Activated B cell treated with CpG ODN at 0.5 μM for 24 hours (primary cell): ENCODE measurements at regions of chrX and their contacts with region 1.

Region 1: GRCh38 chrX:110317820-110318658 is at the start of gene AMMECR1:
- DNase-seq: peak; percentile 74
- ATAC-seq: peak; percentile 85
- H3K4me3 Mint-ChIP-seq: peak within 1 kb of the TSS; percentile 94
- H3K27ac Mint-ChIP-seq: peak within 1 kb of the TSS; percentile 97
- H3K4me1 Mint-ChIP-seq: peaks cover 31% of the 10 kb centered on the region
- H3K27me3 Mint-ChIP-seq: no peaks in the 10 kb centered on the region
- CTCF ChIP-seq: no peak
- total RNA-seq, gene AMMECR1: 9.0 and 10.8 TPM in 2 replicates

Region 2: DNA sequence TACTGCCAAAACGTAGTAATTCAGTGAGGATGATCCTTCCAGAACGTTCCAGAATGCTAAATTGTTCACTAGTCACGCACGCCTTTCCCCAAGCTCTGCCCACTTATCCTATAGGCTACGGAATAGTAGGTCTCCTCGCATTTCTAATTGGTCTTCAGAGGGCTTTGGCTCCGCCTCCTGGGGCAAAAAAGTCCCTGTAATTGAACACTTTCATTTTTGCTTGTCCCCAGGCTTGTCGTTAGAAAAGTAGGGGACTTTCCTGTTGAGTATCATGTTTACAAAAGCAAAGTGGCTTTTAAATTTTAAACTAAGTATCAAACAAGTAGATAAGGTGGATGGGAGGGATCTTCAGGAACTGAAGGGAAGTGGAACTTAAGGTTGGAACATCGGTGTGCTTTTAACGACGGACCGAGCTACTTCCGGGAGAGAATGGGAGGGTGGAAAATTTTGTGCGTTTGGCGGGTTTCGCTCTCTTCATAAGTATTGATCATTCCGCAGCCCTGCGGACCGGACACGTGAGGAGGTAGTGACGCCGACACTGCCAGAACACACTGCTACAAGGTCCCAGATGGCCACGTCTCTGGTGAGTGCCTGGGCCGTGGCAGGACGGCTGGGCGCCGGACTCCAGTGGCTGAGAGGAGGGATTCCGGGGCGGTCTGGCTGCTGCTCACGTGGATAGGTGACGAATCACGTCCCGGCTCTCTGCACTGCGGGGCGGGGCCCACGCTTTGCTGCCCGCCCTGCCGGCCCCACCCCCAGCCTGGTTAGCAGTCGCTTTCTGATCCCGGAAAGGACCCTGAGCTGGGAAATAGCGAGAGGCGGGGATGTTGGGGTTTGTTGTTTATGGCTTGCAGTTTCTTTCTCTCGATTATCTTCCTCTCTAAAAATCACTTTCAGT is 781.4 kb before region 1 on chrX and contains the start of gene NXT2:
- CTCF ChIA-PET with region 1: no interaction called
- POLR2A ChIA-PET with region 1: no interaction called
- intact Hi-C with region 1: loop called (anchors 2 kb)
- DNase-seq: peak; percentile 69
- ATAC-seq: peak; percentile 98
- H3K4me3 Mint-ChIP-seq: peak within 1 kb of the TSS; percentile 94
- H3K27ac Mint-ChIP-seq: peak within 1 kb of the TSS; percentile 98
- H3K4me1 Mint-ChIP-seq: peaks cover 33% of the 10 kb centered on the region
- H3K27me3 Mint-ChIP-seq: no peaks in the 10 kb centered on the region
- CTCF ChIP-seq: no peak
- total RNA-seq, gene NXT2: 9.7 and 12.8 TPM in 2 replicates

Region 3: DNA sequence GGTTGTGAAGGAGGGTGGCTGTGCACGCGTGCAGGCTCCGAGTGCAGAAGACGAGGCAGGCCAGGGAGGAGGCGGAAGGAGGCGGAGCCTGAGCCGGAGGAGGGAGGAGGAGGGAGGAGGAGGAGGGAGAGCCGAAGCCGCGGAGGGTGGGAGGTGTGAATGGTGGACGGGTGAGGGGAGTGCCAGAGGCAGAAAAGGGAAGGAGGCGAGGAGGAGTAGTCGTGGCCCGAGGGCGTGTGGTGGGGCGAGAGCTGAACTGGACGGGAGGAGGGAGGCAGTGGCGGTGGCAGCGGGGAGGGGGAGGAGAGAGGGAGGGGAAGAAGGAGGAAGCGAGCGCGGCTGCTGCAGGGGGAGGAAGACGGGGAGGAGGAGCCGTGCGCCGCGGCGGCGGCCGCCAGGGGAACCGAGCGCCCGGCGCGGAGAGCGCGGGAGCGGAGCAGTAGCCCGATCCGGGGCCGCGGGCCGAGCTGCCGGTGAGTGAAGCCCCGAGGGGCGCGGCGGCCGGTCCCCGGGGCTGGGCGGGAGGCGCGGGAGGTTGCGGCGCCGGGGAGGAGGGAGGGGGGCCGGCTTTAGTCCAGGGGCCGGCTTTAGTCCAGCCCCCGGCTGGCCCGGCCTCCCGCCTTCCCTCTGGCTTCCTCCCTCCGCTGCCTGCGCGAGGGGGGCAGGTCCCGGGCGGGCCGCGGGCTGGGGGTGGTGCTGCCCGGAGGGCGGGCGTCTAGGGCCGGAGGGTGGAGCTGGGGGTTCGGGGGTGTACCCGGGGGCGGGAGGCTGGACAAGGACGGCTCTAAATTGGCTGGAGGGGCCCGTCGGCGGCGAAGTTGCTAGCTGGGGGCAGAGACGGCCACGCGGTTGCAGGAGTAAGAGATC is 315.5 kb before region 1 on chrX and contains the start of gene TMEM164:
- CTCF ChIA-PET with region 1: no interaction called
- POLR2A ChIA-PET with region 1: interaction called, 6 read pairs
- intact Hi-C with region 1: loop called (anchors 1 kb)
- DNase-seq: peak; percentile 71
- ATAC-seq: peak; percentile 74
- H3K4me3 Mint-ChIP-seq: peak within 1 kb of the TSS; percentile 87
- H3K27ac Mint-ChIP-seq: peak within 1 kb of the TSS; percentile 92
- H3K4me1 Mint-ChIP-seq: peaks cover 38% of the 10 kb centered on the region
- H3K27me3 Mint-ChIP-seq: no peaks in the 10 kb centered on the region
- CTCF ChIP-seq: no peak
- total RNA-seq, gene TMEM164: 20.4 and 21.8 TPM in 2 replicates

Region 4: DNA sequence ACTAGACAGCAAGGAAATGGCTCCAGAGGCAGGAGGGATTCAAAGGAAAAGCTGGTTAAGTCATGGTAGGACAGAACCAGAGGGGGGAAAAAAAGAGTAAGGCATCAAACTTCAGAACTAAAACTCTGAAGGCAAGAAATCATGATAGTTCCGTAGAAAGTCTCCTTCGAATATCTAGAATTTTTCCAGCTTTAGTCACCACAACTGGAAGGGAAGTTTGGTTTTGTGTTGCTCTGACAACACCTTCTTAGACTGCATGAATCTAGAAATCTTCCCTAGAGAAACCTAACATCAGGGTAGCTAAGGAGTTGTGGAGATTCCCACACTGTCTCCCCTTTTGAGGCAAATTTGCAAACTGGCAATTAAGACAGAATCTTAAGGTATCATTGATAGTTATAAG is 33.9 kb before region 1 on chrX:
- CTCF ChIA-PET with region 1: no interaction called
- POLR2A ChIA-PET with region 1: no interaction called
- intact Hi-C with region 1: loop called (anchors 5 kb)
- DNase-seq: no peak
- ATAC-seq: no peak
- H3K4me3 Mint-ChIP-seq: no peak overlapping the region
- H3K27ac Mint-ChIP-seq: no peak overlapping the region
- H3K4me1 Mint-ChIP-seq: peaks cover 3% of the 10 kb centered on the region
- H3K27me3 Mint-ChIP-seq: no peaks in the 10 kb centered on the region
- CTCF ChIP-seq: no peak

Region 5: GRCh38 chrX:110407910-110408545 is 90.0 kb after region 1 on chrX:
- CTCF ChIA-PET with region 1: interaction called, 3 read pairs
- POLR2A ChIA-PET with region 1: no interaction called
- intact Hi-C with region 1: loop called (anchors 5 kb)
- DNase-seq: no peak
- ATAC-seq: peak; percentile 42
- H3K4me3 Mint-ChIP-seq: no peak overlapping the region
- H3K27ac Mint-ChIP-seq: no peak overlapping the region
- H3K4me1 Mint-ChIP-seq: peaks cover 1% of the 10 kb centered on the region
- H3K27me3 Mint-ChIP-seq: no peaks in the 10 kb centered on the region
- CTCF ChIP-seq: no peak

Region 6: DNA sequence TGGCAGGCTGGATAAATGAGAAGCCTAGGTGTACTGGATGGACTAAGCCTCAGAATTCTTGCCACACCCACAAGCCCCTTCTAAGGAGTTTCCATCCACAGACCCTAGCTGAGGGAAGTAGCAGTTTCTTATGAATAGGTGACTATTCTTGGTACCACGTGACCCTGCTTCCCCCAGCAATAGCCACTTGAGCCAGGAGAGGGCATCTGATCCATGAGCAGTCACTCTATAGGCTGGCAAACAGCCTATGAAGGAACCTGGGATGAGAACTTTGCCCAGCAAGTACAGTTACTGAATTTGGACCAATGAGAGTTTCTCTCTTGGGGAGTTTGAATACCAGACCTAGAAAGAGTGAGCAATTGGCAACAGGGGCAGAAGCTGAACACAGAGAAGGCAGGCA is 124.6 kb after region 1 on chrX:
- CTCF ChIA-PET with region 1: no interaction called
- POLR2A ChIA-PET with region 1: no interaction called
- intact Hi-C with region 1: no loop called
- DNase-seq: no peak
- ATAC-seq: no peak
- H3K4me3 Mint-ChIP-seq: no peak overlapping the region
- H3K27ac Mint-ChIP-seq: no peak overlapping the region
- H3K4me1 Mint-ChIP-seq: no peaks in the 10 kb centered on the region
- H3K27me3 Mint-ChIP-seq: peaks cover 2% of the 10 kb centered on the region
- CTCF ChIP-seq: no peak